PC-3 (cell line): ENCODE measurements at regions of chr13 and their contacts with region 1.

Region 1: DNA sequence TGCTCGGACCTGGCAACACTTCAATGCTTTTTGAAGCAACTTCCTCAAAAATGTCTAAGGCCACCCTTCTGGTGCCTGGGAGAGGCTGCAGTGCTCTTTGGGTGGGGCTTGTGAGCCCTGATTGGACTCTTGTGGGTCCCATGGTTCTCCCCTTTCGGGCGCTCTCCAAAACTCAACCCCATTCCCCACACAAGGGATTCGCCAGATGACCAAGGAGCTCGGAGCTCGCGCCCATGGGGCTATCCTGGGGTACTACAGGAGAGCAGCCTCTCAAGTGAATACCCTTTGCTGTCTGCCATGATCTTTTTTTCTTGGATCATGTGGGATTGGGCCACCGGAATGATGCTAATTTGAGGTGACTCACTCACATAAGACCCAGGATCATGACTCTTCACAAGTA is 29.7 kb upstream of the KL start:
- DNase-seq: no peak
- ATAC-seq: no peak
- H3K4me3 ChIP-seq: no peak overlapping the region
- H3K27ac ChIP-seq: no peak overlapping the region
- H3K4me1 ChIP-seq: peaks cover 17% of the 10 kb centered on the region
- H3K27me3 ChIP-seq: no peaks in the 10 kb centered on the region
- CTCF ChIP-seq: no peak

Region 2: GRCh38 chr13:32969516-32969941 is 17.0 kb before region 1 on chr13:
- CTCF ChIA-PET with region 1: no interaction called
- POLR2A ChIA-PET with region 1: interaction called, 18 read pairs
- intact Hi-C with region 1: no loop called
- DNase-seq: no peak
- ATAC-seq: no peak
- H3K4me3 ChIP-seq: no peak overlapping the region
- H3K27ac ChIP-seq: no peak overlapping the region
- H3K4me1 ChIP-seq: no peaks in the 10 kb centered on the region
- H3K27me3 ChIP-seq: no peaks in the 10 kb centered on the region
- CTCF ChIP-seq: no peak